ENCODE measurements at regions of chr17 and their contacts with region 1.

Region 1: GRCh38 chr17:48351831-48352332 is 78.1 kb downstream of the SKAP1 start:
- DNase-seq: no peak
- ATAC-seq: no peak
- H3K4me3 Mint-ChIP-seq: no peak overlapping the region
- H3K27ac Mint-ChIP-seq: no peak overlapping the region
- H3K4me1 Mint-ChIP-seq: no peaks in the 10 kb centered on the region
- H3K27me3 Mint-ChIP-seq: peaks cover 26% of the 10 kb centered on the region
- CTCF ChIP-seq: peak; percentile 40; the same call in 1 of the 2 replicates

Region 2: GRCh38 chr17:48457080-48457836 is 105.4 kb after region 1 on chr17:
- CTCF ChIA-PET with region 1: interaction called, 13 read pairs
- POLR2A ChIA-PET with region 1: no interaction called
- DNase-seq: peak; percentile 72
- ATAC-seq: peak; percentile 94
- H3K4me3 Mint-ChIP-seq: peak overlapping the region; percentile 64
- H3K27ac Mint-ChIP-seq: no peak overlapping the region
- H3K4me1 Mint-ChIP-seq: peaks cover 24% of the 10 kb centered on the region
- H3K27me3 Mint-ChIP-seq: peaks cover 66% of the 10 kb centered on the region
- CTCF ChIP-seq: peak; percentile 99

Region 3: DNA sequence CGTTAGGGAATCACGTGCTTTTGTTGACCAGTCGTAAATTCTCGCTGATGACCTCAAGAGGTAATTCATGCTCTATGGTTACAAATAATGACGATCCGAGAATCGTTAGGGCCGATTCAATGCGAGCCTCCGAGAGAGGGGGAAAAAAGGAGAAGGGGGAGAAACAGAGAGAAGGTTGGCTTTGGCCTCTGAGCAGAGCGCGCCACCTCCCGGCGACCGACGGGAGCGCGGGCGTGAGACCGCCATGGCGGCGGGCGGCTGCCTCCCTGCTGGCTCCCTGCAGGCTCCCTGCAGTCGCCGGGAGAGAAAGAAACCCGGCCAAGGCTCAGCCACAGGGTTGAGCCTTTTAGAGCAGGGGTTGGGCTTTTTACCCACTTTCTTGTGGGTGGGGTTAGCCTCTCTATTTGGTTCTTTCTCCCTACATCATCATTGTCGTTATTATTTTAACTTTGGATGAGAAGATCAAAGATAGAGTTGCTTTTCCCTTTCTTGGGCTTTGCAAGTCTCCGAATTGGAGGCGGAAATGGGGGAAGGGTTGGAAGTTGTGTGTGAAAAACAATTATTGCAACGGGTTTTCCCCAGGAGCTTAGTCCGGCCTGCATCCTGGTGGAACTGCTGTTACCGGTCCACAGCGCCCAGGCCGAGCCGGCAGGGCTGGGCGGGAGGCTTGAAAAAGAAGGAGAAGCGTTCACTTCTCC is 242.1 kb after region 1 on chr17:
- CTCF ChIA-PET with region 1: interaction called, 15 read pairs
- POLR2A ChIA-PET with region 1: no interaction called
- DNase-seq: peak; percentile 90
- ATAC-seq: peak; percentile 20
- H3K4me3 Mint-ChIP-seq: peak overlapping the region; percentile 50
- H3K27ac Mint-ChIP-seq: no peak overlapping the region
- H3K4me1 Mint-ChIP-seq: peaks cover 55% of the 10 kb centered on the region
- H3K27me3 Mint-ChIP-seq: peaks cover 100% of the 10 kb centered on the region; the same call in 1 of the 2 replicates
- CTCF ChIP-seq: peak; percentile 90

Region 4: DNA sequence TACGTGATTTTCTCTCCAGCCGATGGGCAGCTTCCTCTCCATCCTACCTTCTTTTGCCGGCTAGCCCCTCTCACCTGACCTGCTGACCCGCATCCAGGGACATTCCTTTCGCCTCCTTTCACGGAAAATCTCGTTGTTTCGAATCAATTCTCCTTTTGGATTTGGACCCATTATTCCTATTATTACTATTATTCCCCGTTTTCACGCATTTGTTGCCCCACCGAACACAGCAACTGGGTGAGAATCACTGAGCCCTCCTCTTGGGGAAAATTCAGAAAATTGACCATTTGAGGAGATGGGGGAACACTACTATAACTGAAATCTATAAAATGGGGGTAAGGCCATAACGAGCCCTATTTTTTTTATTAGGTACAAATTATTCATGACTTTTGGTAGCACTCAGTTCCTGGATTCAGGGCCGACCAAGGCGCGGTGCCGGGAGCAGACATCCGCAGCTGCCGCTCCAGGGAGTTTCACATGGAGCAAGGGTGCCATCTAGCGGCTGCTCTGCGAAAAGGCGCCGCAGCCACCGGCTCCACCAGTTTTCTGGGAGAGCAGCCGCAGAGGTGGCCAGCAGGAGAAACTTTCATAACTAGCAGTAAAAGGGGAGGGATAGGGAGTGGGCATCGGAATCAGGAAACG is 266.5 kb after region 1 on chr17:
- CTCF ChIA-PET with region 1: interaction called, 12 read pairs
- POLR2A ChIA-PET with region 1: no interaction called
- DNase-seq: peak; percentile 92
- ATAC-seq: peak; percentile 29
- H3K4me3 Mint-ChIP-seq: 0 out of 2 replicates have a peak overlapping the region, but pooled peaks have one; percentile 25
- H3K27ac Mint-ChIP-seq: no peak overlapping the region
- H3K4me1 Mint-ChIP-seq: peaks cover 25% of the 10 kb centered on the region
- H3K27me3 Mint-ChIP-seq: peaks cover 100% of the 10 kb centered on the region; the same call in 1 of the 2 replicates
- CTCF ChIP-seq: peak; percentile 92